Uterus (tissue), 4 donors: ENCODE measurements at regions of chr11 and their contacts with region 1.

Region 1: DNA sequence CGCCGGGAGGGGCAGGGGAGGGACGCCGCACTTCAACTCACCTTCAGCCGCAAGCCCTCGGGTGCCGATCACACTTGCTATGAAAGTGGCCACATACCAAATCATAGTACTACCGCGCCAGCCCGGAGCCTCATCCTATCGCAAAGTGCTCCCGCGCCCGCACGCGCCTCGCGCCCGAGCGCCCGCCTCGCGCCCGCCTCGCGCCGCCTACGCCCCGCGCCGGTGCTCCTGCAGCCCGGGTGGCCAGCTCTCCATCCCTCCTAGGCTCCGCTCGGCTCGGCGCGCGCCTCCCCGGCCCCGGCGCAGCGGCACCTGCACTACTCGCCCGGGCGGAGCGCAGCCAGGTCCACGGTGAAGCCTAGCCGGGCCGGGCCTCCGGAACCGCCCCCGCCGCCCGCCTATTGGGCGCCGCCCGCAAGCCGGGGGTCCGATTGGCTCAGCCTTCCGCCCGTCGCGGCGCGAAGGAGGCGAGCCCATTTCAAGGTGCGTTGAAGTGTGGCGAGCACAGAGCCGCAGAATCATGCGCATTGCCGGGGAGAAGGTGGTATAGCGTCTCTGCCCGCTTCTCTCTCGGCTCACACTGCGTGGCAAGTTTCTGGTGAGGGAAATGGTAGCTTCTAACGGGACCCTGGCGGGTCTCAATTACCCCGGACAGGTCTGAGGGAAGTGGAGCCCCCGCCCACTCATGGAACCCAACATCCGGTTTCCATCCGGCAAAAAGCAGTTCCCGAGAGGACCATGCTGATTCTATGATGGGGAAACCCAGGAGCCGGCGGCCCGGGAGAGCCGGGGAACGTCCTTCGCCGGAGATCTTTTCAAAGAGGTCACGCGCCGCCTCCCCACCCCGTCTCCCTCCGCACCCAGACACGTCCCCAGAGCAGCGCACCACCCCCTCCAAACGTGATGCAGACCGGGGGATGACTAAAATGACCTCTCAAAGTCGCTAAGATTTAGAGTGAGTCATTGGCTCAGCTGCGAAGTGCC is at the start of gene IGSF9B:
- DNase-seq: peak; percentile 79 to 90
- H3K4me3 ChIP-seq: peak within 1 kb of the TSS; percentile 49 to 53
- H3K27ac ChIP-seq: peak within 1 kb of the TSS; percentile 77 to 79
- H3K4me1 ChIP-seq: peaks cover 4 to 7% of the 10 kb centered on the region in 2 donors
- H3K27me3 ChIP-seq: no peaks in the 10 kb centered on the region
- CTCF ChIP-seq: peak in 1 of 4 experiments; percentile 29
- POLR2A ChIP-seq: peak; percentile 81 to 91
- total RNA-seq, gene IGSF9B: 6.5 to 106 (median 29.1) TPM

Region 2: GRCh38 chr11:133821776-133822175 is 135.2 kb before region 1 on chr11:
- intact Hi-C with region 1: no loop called
- DNase-seq: no peak
- H3K4me3 ChIP-seq: no peak overlapping the region
- H3K27ac ChIP-seq: no peak overlapping the region
- H3K4me1 ChIP-seq: no peaks in the 10 kb centered on the region
- H3K27me3 ChIP-seq: no peaks in the 10 kb centered on the region
- CTCF ChIP-seq: no peak
- POLR2A ChIP-seq: no peak

Region 3: GRCh38 chr11:134033696-134034491 is 77.0 kb after region 1 on chr11:
- intact Hi-C with region 1: loop called (anchors 10 kb)
- DNase-seq: peak; percentile 84 to 91
- H3K4me3 ChIP-seq: peak overlapping the region in 1 of 2 donors; percentile 6
- H3K27ac ChIP-seq: peak overlapping the region; percentile 89 to 99
- H3K4me1 ChIP-seq: peaks cover 3 to 9% of the 10 kb centered on the region in 2 donors
- H3K27me3 ChIP-seq: no peaks in the 10 kb centered on the region
- CTCF ChIP-seq: no peak
- POLR2A ChIP-seq: peak; percentile 63 to 90

Region 4: GRCh38 chr11:134207538-134208239 is 250.7 kb after region 1 on chr11:
- intact Hi-C with region 1: no loop called
- DNase-seq: peak in 1 of 2 donors; percentile 35
- H3K4me3 ChIP-seq: no peak overlapping the region
- H3K27ac ChIP-seq: no peak overlapping the region
- H3K4me1 ChIP-seq: no peaks in the 10 kb centered on the region
- H3K27me3 ChIP-seq: no peaks in the 10 kb centered on the region
- CTCF ChIP-seq: peak; percentile 41 to 59 (median 50)
- POLR2A ChIP-seq: no peak

Region 5: GRCh38 chr11:134599299-134599771 is 642.4 kb after region 1 on chr11:
- intact Hi-C with region 1: no loop called
- DNase-seq: no peak
- H3K4me3 ChIP-seq: no peak overlapping the region
- H3K27ac ChIP-seq: no peak overlapping the region
- H3K4me1 ChIP-seq: no peaks in the 10 kb centered on the region
- H3K27me3 ChIP-seq: no peaks in the 10 kb centered on the region
- CTCF ChIP-seq: no peak
- POLR2A ChIP-seq: no peak